Panc1 (cell line): ENCODE measurements at regions of chr9 and their contacts with region 1.

Region 1: GRCh38 chr9:122900791-122901190 is 4.4 kb downstream of the RC3H2 start:
- DNase-seq: no peak
- ATAC-seq: no peak
- H3K4me3 ChIP-seq: no peak overlapping the region
- H3K27ac ChIP-seq: no peak overlapping the region
- H3K4me1 ChIP-seq: no peaks in the 10 kb centered on the region; the same call in 1 of the 2 replicates
- H3K27me3 ChIP-seq: no peaks in the 10 kb centered on the region
- CTCF ChIP-seq: no peak

Region 2: GRCh38 chr9:122860317-122861142 is 40.3 kb before region 1 on chr9:
- CTCF ChIA-PET with region 1: no interaction called
- POLR2A ChIA-PET with region 1: no interaction called
- in situ Hi-C with region 1: no loop called
- intact Hi-C with region 1: no loop called
- DNase-seq: peak; percentile 51
- ATAC-seq: peak; percentile 95
- H3K4me3 ChIP-seq: no peak overlapping the region
- H3K27ac ChIP-seq: no peak overlapping the region
- H3K4me1 ChIP-seq: peaks cover 6% of the 10 kb centered on the region; the same call in 1 of the 2 replicates
- H3K27me3 ChIP-seq: no peaks in the 10 kb centered on the region
- CTCF ChIP-seq: no peak

Region 3: DNA sequence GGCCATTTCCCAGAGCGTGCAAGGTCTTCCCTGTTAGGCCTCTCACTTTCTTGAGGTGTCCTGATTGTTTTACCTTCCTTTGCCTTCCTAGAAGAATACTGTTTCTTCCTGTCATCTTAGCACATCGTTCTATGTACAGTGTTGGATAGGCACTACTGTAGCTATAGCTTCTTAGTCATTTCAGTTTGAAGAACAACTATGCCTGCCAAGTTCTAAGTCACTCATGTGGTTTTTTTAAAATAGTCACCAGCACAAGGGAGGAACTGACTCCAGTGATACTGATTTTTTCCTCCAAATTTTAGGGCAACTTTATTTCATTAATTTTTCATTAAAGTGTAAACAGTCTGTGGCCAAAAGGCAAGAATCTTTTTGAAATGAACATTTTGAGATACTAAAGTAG is 1728.8 kb after region 1 on chr9:
- CTCF ChIA-PET with region 1: no interaction called
- POLR2A ChIA-PET with region 1: interaction called, 10 read pairs
- in situ Hi-C with region 1: no loop called
- intact Hi-C with region 1: no loop called
- DNase-seq: no peak
- ATAC-seq: no peak
- H3K4me3 ChIP-seq: no peak overlapping the region
- H3K27ac ChIP-seq: no peak overlapping the region
- H3K4me1 ChIP-seq: no peaks in the 10 kb centered on the region; the same call in 1 of the 2 replicates
- H3K27me3 ChIP-seq: no peaks in the 10 kb centered on the region
- CTCF ChIP-seq: no peak